Gastrocnemius medialis (tissue), 4 donors: ENCODE measurements at regions of chr17 and their contacts with region 1.

Region 1: DNA sequence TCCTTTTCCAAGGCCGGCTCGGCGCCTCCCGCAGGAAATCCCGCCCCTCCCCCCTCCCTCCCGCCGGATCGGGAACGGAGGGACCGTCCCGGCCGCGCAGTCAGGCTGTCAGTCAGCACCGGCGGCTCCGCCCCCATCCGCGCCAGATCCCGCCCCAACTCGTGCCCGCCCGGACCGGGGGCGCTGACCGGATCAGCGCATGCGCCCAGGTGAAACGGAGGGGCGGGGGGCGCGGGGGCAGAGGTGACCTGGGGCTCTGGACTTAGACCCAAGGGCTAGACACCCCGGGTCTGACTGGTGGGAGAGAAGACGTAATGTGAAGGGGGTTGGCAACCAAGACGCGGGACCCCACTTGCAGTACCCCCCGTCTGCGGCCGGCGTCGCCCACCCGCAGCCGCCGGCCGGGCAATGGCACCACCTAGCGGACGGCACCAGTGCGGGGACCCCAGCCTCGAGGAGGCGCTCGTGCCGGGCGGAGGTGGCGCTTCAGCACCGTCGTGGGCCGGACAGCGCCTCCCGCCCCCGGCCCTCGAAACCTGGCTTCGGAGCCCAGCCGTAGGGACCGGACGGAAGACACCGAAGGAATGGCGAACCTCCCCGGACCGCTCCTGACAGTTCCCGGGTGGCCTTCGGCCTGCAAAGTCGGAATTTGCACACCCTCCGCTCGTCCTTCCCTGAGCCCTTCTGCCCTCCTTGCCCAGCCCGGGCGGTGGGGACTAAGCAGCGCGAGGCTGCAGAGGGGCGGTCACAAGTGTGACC is at the start of gene CASKIN2:
- DNase-seq: peak; percentile 91 to 94
- ATAC-seq: peak; percentile 79 to 82
- H3K4me3 ChIP-seq: peak within 1 kb of the TSS; percentile 81 to 95 (median 90)
- H3K27ac ChIP-seq: peak within 1 kb of the TSS; percentile 91 to 95 (median 93)
- H3K4me1 ChIP-seq: peaks cover 38 to 48% of the 10 kb centered on the region in 2 donors
- H3K27me3 ChIP-seq: no peaks in the 10 kb centered on the region
- CTCF ChIP-seq: peak; percentile 97 to 100 (median 99)
- POLR2A ChIP-seq: no peak
- total RNA-seq, gene CASKIN2: 11.3 to 24.1 (median 16.8) TPM

Region 2: GRCh38 chr17:75261336-75262111 is 254.2 kb before region 1 on chr17 and contains the starts of genes GGA3 and MRPS7:
- in situ Hi-C with region 1: no loop called
- intact Hi-C with region 1: loop called (anchors 10 kb)
- DNase-seq: peak; percentile 92 to 93
- ATAC-seq: peak; percentile 95 to 98
- H3K4me3 ChIP-seq: peak within 1 kb of the TSS; percentile 94 to 100 (median 98)
- H3K27ac ChIP-seq: peak within 1 kb of the TSS; percentile 95 to 99 (median 98)
- H3K4me1 ChIP-seq: peaks cover 21 to 40% of the 10 kb centered on the region in 2 donors
- H3K27me3 ChIP-seq: no peaks in the 10 kb centered on the region
- CTCF ChIP-seq: no peak
- POLR2A ChIP-seq: peak; percentile 75 to 81
- total RNA-seq, gene GGA3: 31.3 to 42.3 (median 35.3) TPM
- total RNA-seq, gene MRPS7: 68.5 to 118 (median 82.6) TPM

Region 3: GRCh38 chr17:75289115-75289831 is 226.4 kb before region 1 on chr17 and contains the start of gene SLC25A19:
- in situ Hi-C with region 1: no loop called
- intact Hi-C with region 1: loop called (anchors 10 kb)
- DNase-seq: peak; percentile 99
- ATAC-seq: peak; percentile 95 to 98
- H3K4me3 ChIP-seq: peak within 1 kb of the TSS; percentile 84 to 92 (median 86)
- H3K27ac ChIP-seq: peak within 1 kb of the TSS; percentile 88 to 96 (median 94)
- H3K4me1 ChIP-seq: peaks cover 8 to 9% of the 10 kb centered on the region in 2 donors
- H3K27me3 ChIP-seq: no peaks in the 10 kb centered on the region
- CTCF ChIP-seq: no peak
- POLR2A ChIP-seq: peak; percentile 93 to 98
- total RNA-seq, gene SLC25A19: 6.1 to 18.7 (median 14.4) TPM

Region 4: GRCh38 chr17:75319904-75320691 is 195.6 kb before region 1 on chr17:
- in situ Hi-C with region 1: no loop called
- intact Hi-C with region 1: loop called (anchors 2 kb)
- DNase-seq: no peak
- ATAC-seq: no peak
- H3K4me3 ChIP-seq: no peak overlapping the region
- H3K27ac ChIP-seq: no peak overlapping the region
- H3K4me1 ChIP-seq: peaks cover 6 to 8% of the 10 kb centered on the region in 2 donors
- H3K27me3 ChIP-seq: no peaks in the 10 kb centered on the region
- CTCF ChIP-seq: no peak
- POLR2A ChIP-seq: no peak

Region 5: DNA sequence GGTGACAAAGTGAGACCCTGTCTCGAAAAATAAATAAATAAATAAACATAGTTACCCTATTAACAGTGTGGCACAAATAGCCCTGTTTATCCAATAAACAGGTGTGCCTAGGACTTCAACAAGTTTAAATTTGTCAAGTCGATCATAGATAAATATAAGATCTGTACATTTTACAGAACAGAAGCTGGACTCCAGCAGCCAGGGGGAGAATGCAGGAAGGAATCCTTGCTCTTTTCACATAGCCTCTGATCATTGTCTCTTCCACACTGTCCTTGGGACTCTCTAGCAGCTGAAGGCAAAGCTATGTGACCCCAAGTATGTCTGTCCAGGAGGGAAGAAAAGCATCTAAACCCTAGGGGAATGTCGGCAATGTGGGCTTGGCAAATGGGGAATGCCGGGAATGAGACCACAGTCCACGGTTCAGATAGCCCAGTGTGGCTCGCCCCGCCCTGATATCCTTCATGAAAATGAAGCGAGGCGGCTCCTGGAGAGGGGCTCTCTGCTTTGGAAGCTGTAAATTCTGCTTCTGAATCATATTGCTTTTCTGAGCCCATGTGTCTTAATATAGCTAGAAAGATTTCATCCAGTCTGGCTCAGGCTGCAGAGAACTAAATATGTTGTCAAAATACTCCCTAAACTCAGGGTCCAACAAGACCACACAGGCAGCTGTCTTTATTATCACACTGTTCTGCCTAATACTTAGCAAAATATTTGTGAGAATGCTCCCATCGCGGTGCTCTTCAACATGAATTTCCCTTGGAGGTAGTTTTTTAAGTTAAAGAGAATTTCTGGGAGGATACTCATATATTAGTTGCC is 85.3 kb before region 1 on chr17:
- in situ Hi-C with region 1: loop called (anchors 5 to 10 kb)
- intact Hi-C with region 1: loop called (anchors 1 kb)
- DNase-seq: no peak
- ATAC-seq: peak in 1 of 2 donors; percentile 47
- H3K4me3 ChIP-seq: no peak overlapping the region
- H3K27ac ChIP-seq: peak overlapping the region in 3 of 4 donors; percentile 22 to 53 (median 35)
- H3K4me1 ChIP-seq: peaks cover 12 to 21% of the 10 kb centered on the region in 2 donors
- H3K27me3 ChIP-seq: no peaks in the 10 kb centered on the region
- CTCF ChIP-seq: no peak
- POLR2A ChIP-seq: no peak

Region 6: DNA sequence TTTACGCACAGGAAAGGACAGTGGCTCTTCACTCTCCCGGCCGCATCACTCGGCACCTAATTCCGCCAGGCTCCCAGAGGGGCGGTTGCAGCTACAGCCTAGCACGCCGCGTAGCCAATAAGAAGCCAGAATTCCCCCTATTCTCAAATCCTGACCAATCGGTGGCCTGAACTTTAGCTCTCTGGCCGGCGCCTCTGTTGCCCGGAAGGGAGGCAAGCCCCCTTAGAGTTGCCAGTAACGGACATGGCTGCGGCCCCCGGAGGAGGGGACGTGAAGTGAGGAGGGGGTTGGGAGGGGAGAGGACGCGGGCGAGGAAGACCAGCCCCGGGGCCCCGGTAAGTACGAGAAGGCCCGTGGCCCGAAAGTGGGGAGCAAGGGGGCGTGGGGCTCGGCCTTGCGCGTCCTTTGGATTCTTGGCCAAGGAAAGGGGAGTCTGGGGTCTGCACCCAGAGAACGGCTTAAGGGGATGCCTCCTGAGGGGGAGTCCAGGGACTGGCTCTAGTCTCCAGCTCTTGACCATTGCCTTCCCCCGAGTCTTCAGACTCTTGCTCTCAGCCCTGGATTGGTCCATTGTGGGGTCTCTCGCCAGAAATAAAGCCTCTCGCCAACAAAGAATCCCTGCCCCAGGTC is 59.1 kb before region 1 on chr17 and contains the start of gene TMEM94:
- in situ Hi-C with region 1: no loop called
- intact Hi-C with region 1: loop called (anchors 1 kb)
- DNase-seq: peak; percentile 97
- ATAC-seq: peak; percentile 82 to 88
- H3K4me3 ChIP-seq: peak within 1 kb of the TSS; percentile 78 to 99 (median 96)
- H3K27ac ChIP-seq: peak within 1 kb of the TSS; percentile 94 to 99 (median 98)
- H3K4me1 ChIP-seq: peaks cover 44 to 48% of the 10 kb centered on the region in 2 donors
- H3K27me3 ChIP-seq: no peaks in the 10 kb centered on the region
- CTCF ChIP-seq: no peak
- POLR2A ChIP-seq: peak; percentile 33 to 40
- total RNA-seq, gene TMEM94: 56.5 to 85.5 (median 60.0) TPM

Region 7: GRCh38 chr17:75589012-75589918 is 73.6 kb after region 1 on chr17:
- in situ Hi-C with region 1: no loop called
- intact Hi-C with region 1: loop called (anchors 1 kb)
- DNase-seq: peak; percentile 88 to 89
- ATAC-seq: peak; percentile 87 to 88
- H3K4me3 ChIP-seq: peak overlapping the region; percentile 50 to 70 (median 66)
- H3K27ac ChIP-seq: peak overlapping the region; percentile 67 to 85 (median 79)
- H3K4me1 ChIP-seq: peaks cover 0 to 3% of the 10 kb centered on the region in 2 donors
- H3K27me3 ChIP-seq: peaks cover 18 to 20% (median 19%) of the 10 kb centered on the region in 3 donors
- CTCF ChIP-seq: peak in 4 of 5 experiments; percentile 75 to 97 (median 86)
- POLR2A ChIP-seq: peak; percentile 52